Left ventricle myocardium superior (tissue), 1 donor: ENCODE measurements at regions of chr4 and their contacts with region 1.

Region 1: GRCh38 chr4:101191302-101192098 is 155.8 kb downstream of the PPP3CA start:
- DNase-seq: peak; percentile 80
- ATAC-seq: peak; percentile 99

Region 2: GRCh38 chr4:101347557-101348366 is 156.3 kb after region 1 on chr4:
- intact Hi-C with region 1: loop called (anchors 10 kb)
- DNase-seq: peak; percentile 99
- ATAC-seq: peak; percentile 94